OCI-LY7 (cell line): ENCODE measurements at regions of chr1 and their contacts with region 1.

Region 1: GRCh38 chr1:246773213-246773641 is 49.0 kb downstream of the SCCPDH start:
- DNase-seq: peak; percentile 85
- H3K4me3 ChIP-seq: peak overlapping the region; percentile 47
- H3K27ac ChIP-seq: peak overlapping the region; percentile 93
- H3K4me1 ChIP-seq: peaks cover 50% of the 10 kb centered on the region
- CTCF ChIP-seq: no peak

Region 2: DNA sequence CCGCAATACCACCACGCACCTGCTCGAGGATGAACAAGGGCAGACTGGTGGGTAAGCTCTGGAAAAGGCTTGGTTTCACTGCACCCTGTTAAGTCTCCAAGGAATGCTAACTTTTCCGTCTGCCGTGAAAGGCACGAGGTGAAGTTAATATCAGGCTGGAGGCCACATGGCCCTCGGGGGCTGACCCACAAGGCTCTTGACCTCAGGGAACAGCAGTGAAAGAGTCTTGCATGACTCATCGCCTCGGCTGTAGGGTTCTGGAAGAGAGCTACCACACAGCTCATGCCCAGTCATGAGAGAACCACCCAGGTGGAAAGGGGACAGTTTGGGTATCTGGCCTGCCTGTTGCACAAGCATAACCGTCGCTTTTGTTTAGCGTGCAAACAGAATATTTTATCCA is 24.3 kb before region 1 on chr1:
- CTCF ChIA-PET with region 1: no interaction called
- POLR2A ChIA-PET with region 1: no interaction called
- intact Hi-C with region 1: no loop called
- DNase-seq: no peak
- H3K4me3 ChIP-seq: no peak overlapping the region
- H3K27ac ChIP-seq: no peak overlapping the region
- H3K4me1 ChIP-seq: no peaks in the 10 kb centered on the region
- CTCF ChIP-seq: no peak

Region 3: DNA sequence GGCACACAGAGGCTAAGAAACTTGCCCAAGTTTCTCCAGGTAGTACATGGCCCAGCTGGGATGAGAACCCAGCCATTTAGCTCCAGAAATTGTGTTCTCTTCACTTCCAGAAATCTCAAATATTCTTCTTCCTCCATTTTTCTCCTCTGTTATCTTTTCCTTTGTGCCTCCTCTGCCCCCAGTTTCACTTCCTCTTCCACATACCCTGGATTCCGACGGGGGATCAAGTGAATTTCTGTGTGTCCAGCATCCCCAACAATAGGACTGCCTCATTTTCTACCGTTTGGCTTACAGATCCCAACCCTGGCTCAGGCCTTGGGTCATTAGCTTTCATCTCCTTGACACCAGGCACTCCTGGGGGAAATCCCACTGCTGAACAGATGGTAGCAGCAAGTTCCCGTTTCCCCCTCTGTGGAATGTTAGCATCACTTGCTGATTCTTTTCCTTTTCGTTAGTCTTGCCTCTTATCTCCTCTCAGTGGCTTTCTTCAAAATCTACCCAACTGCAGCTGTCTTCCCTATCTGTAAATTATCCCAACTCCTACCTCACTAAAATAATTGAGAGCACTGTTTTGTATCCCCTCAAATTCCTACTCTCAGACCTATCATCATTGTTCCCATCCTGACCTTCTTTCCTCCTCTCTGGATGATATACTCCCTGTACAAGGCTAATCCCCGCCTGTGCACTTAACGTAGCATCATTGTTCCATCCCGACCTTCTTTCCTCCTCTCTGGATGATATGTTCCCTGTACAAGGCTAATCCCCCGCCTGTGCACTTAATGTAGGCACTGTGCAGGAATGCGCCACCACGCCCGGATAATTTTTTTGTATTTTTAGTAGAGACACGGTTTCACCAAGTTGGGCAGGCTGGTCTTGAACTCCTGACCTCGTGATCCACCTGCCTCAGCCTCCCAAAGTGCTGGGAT is 12.5 kb before region 1 on chr1:
- CTCF ChIA-PET with region 1: interaction called, 4 read pairs
- POLR2A ChIA-PET with region 1: interaction called, 24 read pairs
- intact Hi-C with region 1: no loop called
- DNase-seq: no peak
- H3K4me3 ChIP-seq: no peak overlapping the region
- H3K27ac ChIP-seq: no peak overlapping the region
- H3K4me1 ChIP-seq: peaks cover 23% of the 10 kb centered on the region
- CTCF ChIP-seq: no peak